Gastrocnemius medialis (tissue), 4 donors: ENCODE measurements at regions of chr7 and their contacts with region 1.

Region 1: DNA sequence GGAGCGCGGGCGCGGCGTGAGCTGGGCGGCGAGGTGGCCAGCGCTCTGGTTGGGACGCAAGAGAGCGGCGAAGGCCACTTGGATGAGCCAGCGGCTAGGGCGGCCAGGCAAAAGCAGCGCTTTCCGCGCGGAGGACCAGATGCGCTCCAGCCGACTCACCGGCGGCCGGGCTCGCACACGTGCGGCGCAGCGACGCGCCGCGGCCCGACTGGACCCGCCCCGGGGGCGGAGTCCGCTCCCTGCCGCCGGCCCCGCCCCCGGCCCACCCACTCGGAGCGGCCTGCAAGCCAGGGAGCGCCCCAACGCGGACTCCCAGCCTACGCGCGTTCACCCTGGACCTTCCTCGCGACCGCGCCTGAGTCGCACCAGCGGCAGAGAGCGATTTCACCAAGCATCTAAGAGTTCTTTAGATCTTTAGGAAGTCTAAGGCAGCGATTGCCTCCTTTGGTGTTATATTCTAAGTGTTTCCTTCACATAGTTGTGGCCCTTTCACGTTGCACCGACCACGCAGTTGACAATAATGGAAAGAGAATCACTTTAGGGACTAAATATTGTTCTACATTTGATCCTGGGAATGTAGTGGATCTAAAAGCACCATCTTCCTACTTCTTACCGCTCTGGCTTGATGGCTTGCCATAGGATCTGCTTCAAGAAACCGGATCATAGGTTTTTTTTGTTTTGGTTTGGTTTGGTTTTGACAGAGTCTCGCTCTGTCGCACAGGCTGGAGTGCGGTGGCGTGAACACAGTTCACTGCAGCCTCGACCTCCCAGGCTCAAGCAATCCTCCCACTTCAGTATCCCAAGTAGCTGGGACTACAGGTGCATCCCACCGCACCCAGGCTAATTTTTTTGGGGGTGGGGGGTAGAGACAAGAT is at the start of gene PUS7:
- DNase-seq: peak; percentile 72 to 83
- ATAC-seq: peak; percentile 93 to 95
- H3K4me3 ChIP-seq: peak within 1 kb of the TSS; percentile 56 to 87 (median 64)
- H3K27ac ChIP-seq: peak within 1 kb of the TSS; percentile 82 to 96 (median 86)
- H3K4me1 ChIP-seq: peaks cover 12 to 15% of the 10 kb centered on the region in 2 donors
- H3K27me3 ChIP-seq: no peaks in the 10 kb centered on the region
- CTCF ChIP-seq: peak in 2 of 5 experiments; percentile 16 to 26
- POLR2A ChIP-seq: peak; percentile 90 to 91
- total RNA-seq, gene PUS7: 13.4 to 66.2 (median 17.8) TPM

Region 2: DNA sequence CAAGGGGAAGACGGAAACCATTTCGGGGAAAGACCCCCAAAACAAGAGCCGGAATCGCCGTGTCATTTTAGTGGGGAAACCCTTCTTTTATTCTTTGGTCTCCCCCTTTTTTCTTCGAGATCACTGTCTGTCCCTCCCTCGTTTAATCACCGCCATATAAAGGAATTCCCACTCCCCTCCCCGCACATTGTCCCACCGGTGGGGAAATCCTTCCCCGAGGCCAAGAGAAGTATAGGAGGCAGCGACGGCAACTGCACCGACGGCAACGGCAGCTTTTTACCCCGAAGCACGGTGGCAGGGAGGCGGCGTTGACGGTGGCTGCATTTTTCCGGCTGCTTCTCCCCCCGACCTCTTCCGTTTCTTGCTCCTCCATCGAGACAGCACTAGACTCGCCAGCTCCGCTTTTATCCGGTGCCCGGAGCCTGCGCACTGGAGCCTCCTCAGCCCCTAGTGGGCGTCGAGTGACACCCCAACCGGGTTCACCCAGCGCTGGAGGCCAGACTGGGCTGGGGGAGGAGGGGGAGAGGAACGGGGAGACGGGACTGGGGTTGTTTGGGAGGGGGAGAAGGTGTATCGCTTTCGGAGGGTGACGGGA is 509.0 kb before region 1 on chr7:
- in situ Hi-C with region 1: no loop called
- intact Hi-C with region 1: loop called (anchors 1 kb)
- DNase-seq: peak; percentile 96 to 97
- ATAC-seq: peak; percentile 65 to 69
- H3K4me3 ChIP-seq: peak overlapping the region; percentile 81 to 98 (median 92)
- H3K27ac ChIP-seq: peak overlapping the region in 1 of 4 donors; percentile 100
- H3K4me1 ChIP-seq: peaks cover 51 to 52% of the 10 kb centered on the region in 2 donors
- H3K27me3 ChIP-seq: no peaks in the 10 kb centered on the region
- CTCF ChIP-seq: peak; percentile 45 to 78 (median 65)
- POLR2A ChIP-seq: peak; percentile 95 to 97

Region 3: GRCh38 chr7:105678811-105679495 is 156.7 kb after region 1 on chr7:
- in situ Hi-C with region 1: no loop called
- intact Hi-C with region 1: loop called (anchors 10 kb)
- DNase-seq: peak; percentile 75 to 81
- ATAC-seq: peak; percentile 82 to 91
- H3K4me3 ChIP-seq: peak overlapping the region; percentile 39 to 60 (median 50)
- H3K27ac ChIP-seq: peak overlapping the region; percentile 59 to 83 (median 74)
- H3K4me1 ChIP-seq: peaks cover 43 to 63% of the 10 kb centered on the region in 2 donors
- H3K27me3 ChIP-seq: no peaks in the 10 kb centered on the region
- CTCF ChIP-seq: no peak
- POLR2A ChIP-seq: peak; percentile 29 to 53

Region 4: DNA sequence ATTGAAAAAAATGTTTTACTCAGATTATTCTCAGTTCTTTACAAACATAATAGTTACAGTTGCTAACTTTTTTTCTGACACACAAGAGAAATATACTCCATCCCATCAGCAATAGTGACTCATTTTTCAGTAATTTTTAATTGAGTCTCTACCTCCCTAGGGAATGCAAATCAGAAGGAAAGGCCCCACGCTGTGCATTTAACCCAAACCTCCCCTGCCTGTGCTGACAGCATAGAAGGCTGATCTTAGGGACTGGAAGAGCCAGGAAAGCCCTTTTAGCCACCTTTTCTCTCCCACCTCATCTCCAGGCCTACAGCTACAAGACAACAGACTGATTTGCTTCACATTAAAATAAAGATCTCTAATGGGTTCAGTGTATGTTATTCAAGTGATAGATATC is 1318.0 kb after region 1 on chr7:
- in situ Hi-C with region 1: no loop called
- intact Hi-C with region 1: no loop called
- DNase-seq: no peak
- ATAC-seq: no peak
- H3K4me3 ChIP-seq: no peak overlapping the region
- H3K27ac ChIP-seq: no peak overlapping the region
- H3K4me1 ChIP-seq: no peaks in the 10 kb centered on the region
- H3K27me3 ChIP-seq: no peaks in the 10 kb centered on the region
- CTCF ChIP-seq: no peak
- POLR2A ChIP-seq: no peak